GM12878 (cell line): ENCODE measurements at regions of chr3 and their contacts with region 1.

Region 1: DNA sequence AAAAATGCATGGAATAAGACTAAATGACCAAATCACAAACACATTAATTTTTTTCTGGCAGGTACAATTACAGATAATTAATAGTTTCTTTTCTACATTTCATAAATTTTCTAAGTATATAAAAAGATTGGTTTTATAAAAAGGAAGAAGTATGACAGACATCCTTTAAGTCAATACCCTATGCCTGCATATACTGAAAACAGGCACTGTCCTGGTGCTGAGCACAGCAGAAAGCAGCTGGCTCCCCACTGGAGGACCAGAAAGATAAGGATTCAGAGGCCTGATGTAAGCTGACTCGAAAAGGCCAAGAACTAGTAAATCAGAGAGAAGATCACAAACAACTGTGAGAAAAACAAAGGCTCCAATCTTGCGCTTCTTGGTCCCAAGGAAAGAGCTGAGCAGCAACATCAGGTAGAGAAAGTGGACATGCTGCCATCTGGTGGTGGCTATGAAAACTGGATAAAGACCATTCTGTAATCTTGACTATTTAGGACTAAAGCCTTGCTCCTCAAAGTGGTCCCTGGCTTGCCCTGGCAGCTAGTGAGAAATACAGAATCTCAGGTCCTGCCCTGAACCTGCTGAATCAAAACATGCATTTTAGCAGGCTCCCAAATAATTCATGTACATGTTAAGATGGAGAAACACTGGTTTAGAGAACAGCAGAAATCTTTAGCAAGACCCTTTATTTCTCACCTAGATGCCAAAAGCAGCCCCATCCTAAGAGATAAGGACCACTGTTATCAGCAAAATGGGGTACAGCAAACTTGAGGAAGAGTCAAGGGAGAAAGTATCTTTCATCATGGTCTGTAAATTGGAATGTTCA is 76.0 kb downstream of the TRANK1 start:
- DNase-seq: peak; percentile 16
- ATAC-seq: peak; percentile 98
- H3K4me3 ChIP-seq: no peak overlapping the region
- H3K27ac ChIP-seq: no peak overlapping the region
- H3K4me1 ChIP-seq: no peaks in the 10 kb centered on the region
- H3K27me3 ChIP-seq: no peaks in the 10 kb centered on the region
- CTCF ChIP-seq: peak; percentile 70 to 78 (median 75)
- EP300 ChIP-seq: no peak
- POLR2A ChIP-seq: no peak
- RAD21 ChIP-seq: peak; percentile 78

Region 2: DNA sequence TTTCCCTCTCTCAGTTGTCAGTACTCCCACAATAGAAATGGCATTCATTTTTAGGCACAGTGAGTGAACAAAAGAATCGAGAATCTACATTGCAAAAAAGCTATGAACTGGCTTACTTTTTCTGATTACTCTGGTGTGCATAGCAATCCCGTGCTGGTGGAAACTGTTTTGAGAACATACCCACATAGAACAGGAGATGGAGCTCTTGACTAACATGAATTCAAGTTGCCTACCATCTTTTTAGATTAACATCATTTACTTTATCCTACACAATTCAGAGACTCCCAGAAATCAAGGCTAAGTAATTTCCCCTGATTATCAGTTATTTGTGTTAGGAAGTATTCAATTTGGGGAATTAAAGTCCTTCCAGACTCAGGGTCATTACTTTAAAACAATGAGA is 902.9 kb before region 1 on chr3:
- CTCF ChIA-PET with region 1: interaction called, 3 read pairs
- POLR2A ChIA-PET with region 1: no interaction called
- RAD21 ChIA-PET with region 1: interaction called, 3 read pairs
- SMC1A ChIA-PET with region 1: interaction called, 4 read pairs
- in situ Hi-C with region 1: no loop called
- intact Hi-C with region 1: loop called (anchors 10 kb)
- DNase-seq: no peak
- ATAC-seq: peak; percentile 75
- H3K4me3 ChIP-seq: no peak overlapping the region
- H3K27ac ChIP-seq: no peak overlapping the region
- H3K4me1 ChIP-seq: no peaks in the 10 kb centered on the region
- H3K27me3 ChIP-seq: no peaks in the 10 kb centered on the region
- CTCF ChIP-seq: peak; percentile 22 to 59 (median 24); a peak in 4 of 6 replicates
- EP300 ChIP-seq: no peak
- POLR2A ChIP-seq: no peak
- RAD21 ChIP-seq: peak; percentile 63

Region 3: GRCh38 chr3:36734742-36735141 is 134.1 kb before region 1 on chr3:
- CTCF ChIA-PET with region 1: interaction called, 23 read pairs
- POLR2A ChIA-PET with region 1: no interaction called
- RAD21 ChIA-PET with region 1: interaction called, 8 read pairs
- SMC1A ChIA-PET with region 1: interaction called, 13 read pairs
- in situ Hi-C with region 1: loop called (anchors 10 kb)
- intact Hi-C with region 1: loop called (anchors 1 kb)
- DNase-seq: no peak
- ATAC-seq: no peak
- H3K4me3 ChIP-seq: no peak overlapping the region
- H3K27ac ChIP-seq: no peak overlapping the region
- H3K4me1 ChIP-seq: no peaks in the 10 kb centered on the region
- H3K27me3 ChIP-seq: peaks cover 0 to 2% of the 10 kb centered on the region in 2 experiments; a peak in 1 of 4 replicates
- CTCF ChIP-seq: no peak
- EP300 ChIP-seq: no peak
- POLR2A ChIP-seq: no peak
- RAD21 ChIP-seq: no peak

Region 4: GRCh38 chr3:36792342-36792741 is 76.5 kb before region 1 on chr3:
- CTCF ChIA-PET with region 1: interaction called, 4 read pairs
- POLR2A ChIA-PET with region 1: no interaction called
- RAD21 ChIA-PET with region 1: interaction called, 6 read pairs
- SMC1A ChIA-PET with region 1: interaction called, 7 read pairs
- in situ Hi-C with region 1: no loop called
- intact Hi-C with region 1: loop called (anchors 1 kb)
- DNase-seq: no peak
- ATAC-seq: peak; percentile 92
- H3K4me3 ChIP-seq: no peak overlapping the region
- H3K27ac ChIP-seq: no peak overlapping the region
- H3K4me1 ChIP-seq: no peaks in the 10 kb centered on the region
- H3K27me3 ChIP-seq: peaks cover 0 to 2% of the 10 kb centered on the region in 2 experiments; a peak in 1 of 4 replicates
- CTCF ChIP-seq: peak; percentile 44 to 53 (median 53); a peak in 5 of 6 replicates
- EP300 ChIP-seq: no peak
- POLR2A ChIP-seq: no peak
- RAD21 ChIP-seq: peak; percentile 72

Region 5: DNA sequence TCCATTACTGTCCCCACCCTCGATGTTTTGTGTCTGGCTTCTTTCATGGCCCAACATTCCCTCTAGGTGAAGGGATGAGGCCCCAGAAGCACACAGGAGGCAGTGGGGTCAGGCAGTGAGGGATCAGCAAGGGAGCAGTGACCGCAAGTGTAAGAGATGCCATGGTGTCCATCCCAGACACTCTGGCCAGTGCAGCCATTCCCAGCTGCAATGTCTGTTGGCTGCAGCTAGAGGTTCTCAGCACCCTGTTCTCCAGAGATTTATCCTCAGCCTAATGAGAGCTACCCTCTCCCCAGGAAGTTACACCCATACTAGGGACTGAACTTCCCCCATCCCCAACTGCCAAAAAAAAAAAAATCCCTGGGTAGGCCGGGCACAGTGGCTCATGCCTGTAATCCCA is 35.8 kb after region 1 on chr3:
- CTCF ChIA-PET with region 1: interaction called, 16 read pairs
- POLR2A ChIA-PET with region 1: interaction called, 3 read pairs
- RAD21 ChIA-PET with region 1: interaction called, 6 read pairs
- SMC1A ChIA-PET with region 1: interaction called, 10 read pairs
- in situ Hi-C with region 1: no loop called
- intact Hi-C with region 1: no loop called
- DNase-seq: no peak
- ATAC-seq: peak; percentile 16; the same call in 2 of the 3 replicates
- H3K4me3 ChIP-seq: no peak overlapping the region
- H3K27ac ChIP-seq: no peak overlapping the region
- H3K4me1 ChIP-seq: peaks cover 7% of the 10 kb centered on the region
- H3K27me3 ChIP-seq: peaks cover 0 to 1% of the 10 kb centered on the region in 2 experiments; a peak in 1 of 4 replicates
- CTCF ChIP-seq: peak; percentile 38 to 62 (median 51); a peak in 4 of 6 replicates
- EP300 ChIP-seq: no peak
- POLR2A ChIP-seq: no peak
- RAD21 ChIP-seq: peak; percentile 55

Region 6: DNA sequence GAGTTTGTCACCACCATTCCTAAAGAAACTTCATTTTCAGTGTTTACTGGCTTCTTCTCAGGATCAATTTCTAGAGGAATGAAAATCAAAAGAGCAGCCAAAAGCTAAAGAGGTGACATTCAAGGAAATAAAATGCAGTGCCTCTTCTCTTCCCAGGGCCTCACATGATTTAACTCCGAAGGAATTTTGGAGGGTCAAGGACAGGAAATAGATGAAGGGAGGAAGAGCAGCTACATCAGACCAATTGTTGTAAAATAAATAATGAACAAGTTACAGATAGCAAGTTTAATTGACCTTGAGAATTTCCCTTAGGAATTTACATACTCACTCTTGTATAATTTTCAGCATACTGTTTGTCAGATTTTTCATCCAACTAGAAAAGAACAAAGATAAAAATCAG is 227.5 kb after region 1 on chr3:
- CTCF ChIA-PET with region 1: no interaction called
- POLR2A ChIA-PET with region 1: no interaction called
- RAD21 ChIA-PET with region 1: no interaction called
- SMC1A ChIA-PET with region 1: no interaction called
- in situ Hi-C with region 1: no loop called
- intact Hi-C with region 1: no loop called
- DNase-seq: no peak
- ATAC-seq: no peak
- H3K4me3 ChIP-seq: no peak overlapping the region
- H3K27ac ChIP-seq: no peak overlapping the region
- H3K4me1 ChIP-seq: no peaks in the 10 kb centered on the region
- H3K27me3 ChIP-seq: no peaks in the 10 kb centered on the region
- CTCF ChIP-seq: no peak
- EP300 ChIP-seq: no peak
- POLR2A ChIP-seq: no peak
- RAD21 ChIP-seq: no peak